ENCODE measurements at regions of chr5 and their contacts with region 1.

Region 1: GRCh38 chr5:86971034-86971571 is 296.6 kb upstream of the RASA1 start:
- DNase-seq: no peak

Region 2: GRCh38 chr5:86880785-86881492 is 90.2 kb before region 1 on chr5:
- intact Hi-C with region 1: loop called (anchors 5 kb)
- DNase-seq: peak in 40 of 42 donors; percentile 12 to 80 (median 48)

Region 3: GRCh38 chr5:88251048-88251711 is 1280.1 kb after region 1 on chr5:
- intact Hi-C with region 1: no loop called
- DNase-seq: no peak

Measured in head of caudate nucleus (tissue), 42 donors.